Activated CD4-positive, alpha-beta memory T cell treated with anti-CD3 and anti-CD28 coated beads, Interleukin-2, amount 10 ng/mL, durations not matched to agents 7 days and 5 days (primary cell): ENCODE measurements at regions of chr1 and their contacts with region 1.

Region 1: GRCh38 chr1:28886731-28887418 is 27.5 kb upstream of the EPB41 start:
- DNase-seq: peak; percentile 92
- H3K4me3 Mint-ChIP-seq: peak overlapping the region; percentile 89
- H3K27ac Mint-ChIP-seq: peak overlapping the region; percentile 82
- H3K4me1 Mint-ChIP-seq: peaks cover 55% of the 10 kb centered on the region
- H3K27me3 Mint-ChIP-seq: no peaks in the 10 kb centered on the region

Region 2: DNA sequence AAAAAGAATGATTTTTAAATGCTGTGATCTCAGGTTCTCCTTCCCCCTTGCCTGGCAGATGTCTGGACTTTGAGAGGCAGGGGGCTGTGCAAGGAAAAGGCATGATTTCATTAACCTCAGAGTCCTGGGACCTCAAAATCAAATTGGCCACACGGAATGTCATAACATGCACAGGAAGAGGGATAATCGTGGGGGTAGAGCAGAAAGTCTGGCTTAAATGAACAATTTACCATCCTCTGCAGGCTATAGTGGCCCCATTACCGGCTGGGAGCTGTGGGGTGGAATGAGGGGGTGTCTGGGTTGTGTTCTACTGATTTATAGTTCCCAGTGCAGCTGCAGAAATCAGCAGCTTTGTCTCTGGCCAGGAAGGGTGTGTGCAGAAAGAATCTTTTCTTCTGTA is 64.1 kb before region 1 on chr1:
- CTCF ChIA-PET with region 1: no interaction called
- POLR2A ChIA-PET with region 1: no interaction called
- DNase-seq: no peak
- H3K4me3 Mint-ChIP-seq: no peak overlapping the region
- H3K27ac Mint-ChIP-seq: no peak overlapping the region
- H3K4me1 Mint-ChIP-seq: no peaks in the 10 kb centered on the region
- H3K27me3 Mint-ChIP-seq: peaks cover 2% of the 10 kb centered on the region

Region 3: DNA sequence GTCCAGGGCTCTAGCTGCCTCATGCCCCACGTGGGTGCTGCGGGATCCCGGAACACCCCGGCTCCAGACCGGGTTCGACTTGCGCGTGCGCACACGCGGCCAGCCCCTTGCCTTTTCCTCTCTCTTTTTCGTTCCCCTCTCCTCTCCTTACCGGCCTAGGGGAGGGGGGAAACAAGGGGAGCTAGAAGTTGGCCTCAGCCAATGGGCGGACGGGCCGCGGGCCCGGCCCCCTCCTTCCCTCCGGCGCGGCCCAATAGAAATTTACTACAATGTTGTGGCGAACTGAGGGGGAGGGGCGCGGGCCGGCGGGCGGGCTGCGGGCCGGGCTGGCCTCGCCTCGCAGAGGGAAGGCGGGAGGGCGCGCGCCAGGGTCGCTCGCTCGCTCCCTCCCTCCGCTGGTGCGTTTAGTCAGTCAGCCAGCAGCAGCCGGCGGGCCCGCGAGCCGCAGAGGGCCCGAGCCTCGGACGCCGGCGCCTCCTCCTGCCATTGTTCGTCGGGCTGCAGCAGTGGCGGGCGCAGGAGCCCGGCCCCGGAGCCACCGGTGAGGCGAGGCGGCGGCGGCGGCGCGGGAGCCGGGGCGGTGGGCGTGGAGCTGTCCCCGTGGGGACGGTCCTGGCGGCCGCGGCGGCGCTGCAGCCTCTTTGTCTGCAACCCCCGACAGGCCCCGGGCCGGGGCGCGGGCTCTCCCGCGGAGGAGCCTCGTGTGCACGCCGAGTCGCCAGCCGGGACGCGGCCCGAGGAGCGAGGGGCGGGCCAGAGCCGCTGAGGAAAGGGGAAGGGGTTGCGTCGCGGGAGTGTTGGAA is 27.6 kb after region 1 on chr1 and contains the start of gene EPB41:
- CTCF ChIA-PET with region 1: interaction called, 9 read pairs
- POLR2A ChIA-PET with region 1: interaction called, 16 read pairs
- DNase-seq: peak; percentile 90
- H3K4me3 Mint-ChIP-seq: peak within 1 kb of the TSS; percentile 89
- H3K27ac Mint-ChIP-seq: peak within 1 kb of the TSS; percentile 88
- H3K4me1 Mint-ChIP-seq: peaks cover 41% of the 10 kb centered on the region
- H3K27me3 Mint-ChIP-seq: no peaks in the 10 kb centered on the region
- total RNA-seq, gene EPB41: 95.0 to 97.6 TPM

Region 4: GRCh38 chr1:28926629-28927265 is 39.9 kb after region 1 on chr1:
- CTCF ChIA-PET with region 1: interaction called, 3 read pairs
- POLR2A ChIA-PET with region 1: interaction called, 12 read pairs
- DNase-seq: peak; percentile 40
- H3K4me3 Mint-ChIP-seq: peak overlapping the region; percentile 50
- H3K27ac Mint-ChIP-seq: peak overlapping the region; percentile 89
- H3K4me1 Mint-ChIP-seq: peaks cover 44% of the 10 kb centered on the region
- H3K27me3 Mint-ChIP-seq: no peaks in the 10 kb centered on the region

Region 5: GRCh38 chr1:29033829-29034466 is 147.1 kb after region 1 on chr1:
- CTCF ChIA-PET with region 1: interaction called, 284 read pairs
- POLR2A ChIA-PET with region 1: interaction called, 7 read pairs
- DNase-seq: no peak
- H3K4me3 Mint-ChIP-seq: no peak overlapping the region
- H3K27ac Mint-ChIP-seq: no peak overlapping the region
- H3K4me1 Mint-ChIP-seq: no peaks in the 10 kb centered on the region
- H3K27me3 Mint-ChIP-seq: no peaks in the 10 kb centered on the region